CD8-positive, alpha-beta T cell (primary cell): ENCODE measurements at regions of chr3 and their contacts with region 1.

Region 1: GRCh38 chr3:43503067-43503728 is 118.6 kb downstream of the ANO10 start:
- DNase-seq: peak in 2 of 9 experiments; percentile 57 to 72
- ATAC-seq: peak; percentile 60
- H3K4me3 ChIP-seq: no peak overlapping the region
- H3K4me3 Mint-ChIP-seq: no peak overlapping the region
- H3K27ac ChIP-seq: no peak overlapping the region
- H3K27ac Mint-ChIP-seq: no peak overlapping the region
- H3K4me1 ChIP-seq: peaks cover 42% of the 10 kb centered on the region
- H3K4me1 Mint-ChIP-seq: peaks cover 54% of the 10 kb centered on the region
- H3K27me3 ChIP-seq: no peaks in the 10 kb centered on the region
- H3K27me3 Mint-ChIP-seq: no peaks in the 10 kb centered on the region
- CTCF ChIP-seq: peak; percentile 65

Region 2: GRCh38 chr3:42556089-42556632 is 947.0 kb before region 1 on chr3:
- CTCF ChIA-PET with region 1: no interaction called
- POLR2A ChIA-PET with region 1: no interaction called
- intact Hi-C with region 1: no loop called
- DNase-seq: peak in 8 of 9 experiments; percentile 18 to 82 (median 58)
- ATAC-seq: peak; percentile 83
- H3K4me3 ChIP-seq: no peak overlapping the region
- H3K4me3 Mint-ChIP-seq: peak overlapping the region; percentile 59
- H3K27ac ChIP-seq: peak overlapping the region; percentile 42 to 55
- H3K27ac Mint-ChIP-seq: peak overlapping the region; percentile 97
- H3K4me1 ChIP-seq: peaks cover 21% of the 10 kb centered on the region
- H3K4me1 Mint-ChIP-seq: peaks cover 29% of the 10 kb centered on the region
- H3K27me3 ChIP-seq: no peaks in the 10 kb centered on the region
- H3K27me3 Mint-ChIP-seq: no peaks in the 10 kb centered on the region
- CTCF ChIP-seq: no peak

Region 3: GRCh38 chr3:43215663-43216275 is 287.4 kb before region 1 on chr3:
- CTCF ChIA-PET with region 1: interaction called, 17 read pairs
- POLR2A ChIA-PET with region 1: no interaction called
- intact Hi-C with region 1: no loop called
- DNase-seq: peak in 2 of 9 experiments; percentile 30 to 49
- ATAC-seq: peak; percentile 39
- H3K4me3 ChIP-seq: no peak overlapping the region
- H3K4me3 Mint-ChIP-seq: no peak overlapping the region
- H3K27ac ChIP-seq: peak overlapping the region in 1 of 2 experiments; percentile 3
- H3K27ac Mint-ChIP-seq: peak overlapping the region; percentile 82
- H3K4me1 ChIP-seq: peaks cover 47% of the 10 kb centered on the region
- H3K4me1 Mint-ChIP-seq: peaks cover 53% of the 10 kb centered on the region
- H3K27me3 ChIP-seq: no peaks in the 10 kb centered on the region
- H3K27me3 Mint-ChIP-seq: no peaks in the 10 kb centered on the region
- CTCF ChIP-seq: peak; percentile 23

Region 4: GRCh38 chr3:43223670-43224364 is 279.4 kb before region 1 on chr3:
- CTCF ChIA-PET with region 1: interaction called, 24 read pairs
- POLR2A ChIA-PET with region 1: interaction called, 4 read pairs
- intact Hi-C with region 1: loop called (anchors 1 to 2 kb)
- DNase-seq: peak in 2 of 9 experiments; percentile 50 to 58
- ATAC-seq: peak; percentile 30
- H3K4me3 ChIP-seq: no peak overlapping the region
- H3K4me3 Mint-ChIP-seq: no peak overlapping the region
- H3K27ac ChIP-seq: no peak overlapping the region
- H3K27ac Mint-ChIP-seq: peak overlapping the region; percentile 81
- H3K4me1 ChIP-seq: peaks cover 58% of the 10 kb centered on the region
- H3K4me1 Mint-ChIP-seq: peaks cover 64% of the 10 kb centered on the region
- H3K27me3 ChIP-seq: no peaks in the 10 kb centered on the region
- H3K27me3 Mint-ChIP-seq: no peaks in the 10 kb centered on the region
- CTCF ChIP-seq: peak; percentile 78

Region 5: GRCh38 chr3:43389388-43390254 is 113.6 kb before region 1 on chr3:
- CTCF ChIA-PET with region 1: interaction called, 21 read pairs
- POLR2A ChIA-PET with region 1: interaction called, 4 read pairs
- intact Hi-C with region 1: no loop called
- DNase-seq: peak; percentile 40 to 93 (median 74)
- ATAC-seq: peak; percentile 89
- H3K4me3 ChIP-seq: peak overlapping the region in 1 of 2 experiments; percentile 21
- H3K4me3 Mint-ChIP-seq: peak overlapping the region; percentile 50
- H3K27ac ChIP-seq: peak overlapping the region; percentile 45 to 85
- H3K27ac Mint-ChIP-seq: peak overlapping the region; percentile 92
- H3K4me1 ChIP-seq: peaks cover 32% of the 10 kb centered on the region
- H3K4me1 Mint-ChIP-seq: peaks cover 80% of the 10 kb centered on the region
- H3K27me3 ChIP-seq: no peaks in the 10 kb centered on the region
- H3K27me3 Mint-ChIP-seq: no peaks in the 10 kb centered on the region
- CTCF ChIP-seq: no peak

Region 6: GRCh38 chr3:43461345-43461744 is 41.9 kb before region 1 on chr3:
- CTCF ChIA-PET with region 1: interaction called, 4 read pairs
- POLR2A ChIA-PET with region 1: no interaction called
- intact Hi-C with region 1: loop called in 1 of 2 experiments (anchors 5 kb)
- DNase-seq: no peak
- ATAC-seq: no peak
- H3K4me3 ChIP-seq: no peak overlapping the region
- H3K4me3 Mint-ChIP-seq: no peak overlapping the region
- H3K27ac ChIP-seq: no peak overlapping the region
- H3K27ac Mint-ChIP-seq: no peak overlapping the region
- H3K4me1 ChIP-seq: peaks cover 5% of the 10 kb centered on the region
- H3K4me1 Mint-ChIP-seq: peaks cover 15% of the 10 kb centered on the region
- H3K27me3 ChIP-seq: no peaks in the 10 kb centered on the region
- H3K27me3 Mint-ChIP-seq: no peaks in the 10 kb centered on the region
- CTCF ChIP-seq: no peak